ENCODE measurements at regions of chr1 and their contacts with region 1.

Region 1: GRCh38 chr1:6784560-6785317 is 515 bp upstream of the CAMTA1 start:
- DNase-seq: peak; percentile 98 to 100 (median 100)
- H3K4me3 ChIP-seq: peak overlapping the region; percentile 60 to 99 (median 87)
- H3K27ac ChIP-seq: peak overlapping the region; percentile 82 to 100 (median 96)
- H3K27me3 ChIP-seq: no peaks in the 10 kb centered on the region
- CTCF ChIP-seq: peak in 11 of 56 donors; percentile 2 to 19 (median 9)

Region 2: GRCh38 chr1:6624710-6625583 is 159.8 kb before region 1 on chr1 and contains the start of gene THAP3:
- intact Hi-C with region 1: loop called in 1 of 2 experiments (anchors 10 kb)
- DNase-seq: peak; percentile 65 to 90 (median 81)
- H3K4me3 ChIP-seq: peak within 1 kb of the TSS; percentile 64 to 97 (median 86)
- H3K27ac ChIP-seq: peak within 1 kb of the TSS; percentile 38 to 95 (median 88)
- H3K27me3 ChIP-seq: no peaks in the 10 kb centered on the region
- CTCF ChIP-seq: peak in 22 of 56 donors; percentile 7 to 50 (median 22)
- total RNA-seq, gene THAP3: 15.9 to 40.5 (median 24.6) TPM

Region 3: DNA sequence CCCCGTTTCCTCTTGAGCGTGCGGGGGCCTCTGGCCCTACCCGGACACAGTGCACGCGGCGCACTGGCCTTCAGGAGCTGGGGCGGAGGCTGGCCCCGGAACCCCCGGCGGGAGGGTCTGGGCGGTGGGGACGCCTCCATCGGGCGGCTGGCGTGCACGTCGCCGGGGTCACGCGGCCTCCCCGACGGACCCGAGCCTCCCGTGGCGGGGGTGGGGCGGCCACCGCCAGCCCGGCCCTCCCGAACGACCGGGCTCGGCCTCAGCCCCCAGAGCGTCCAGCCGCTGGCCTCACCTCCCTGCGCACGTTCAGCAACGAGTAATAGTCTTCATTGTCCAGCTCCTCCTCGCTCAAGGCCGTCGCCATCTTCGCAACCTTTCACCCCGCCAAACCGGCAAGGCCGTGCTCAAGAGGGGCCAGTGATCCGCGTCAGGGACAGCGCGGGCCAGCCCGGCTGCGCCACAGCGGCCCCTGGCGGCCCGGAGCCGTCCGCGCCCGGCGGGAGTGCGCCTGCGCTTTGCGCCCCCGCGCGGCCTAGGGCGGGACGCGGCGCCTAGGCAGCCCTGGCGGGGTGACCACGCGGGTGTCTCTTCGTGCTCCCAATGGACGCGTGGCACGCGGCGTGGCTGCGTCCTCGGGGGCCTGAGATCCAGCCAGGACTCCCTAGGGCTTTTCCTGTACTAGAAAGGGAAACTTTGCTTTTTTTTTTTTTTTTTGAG is 83.1 kb before region 1 on chr1 and contains the start of gene DNAJC11:
- intact Hi-C with region 1: loop called (anchors 2 to 5 kb)
- DNase-seq: peak; percentile 80 to 94 (median 88)
- H3K4me3 ChIP-seq: peak within 1 kb of the TSS; percentile 67 to 100 (median 98)
- H3K27ac ChIP-seq: peak within 1 kb of the TSS in 57 of 59 donors; percentile 41 to 92 (median 79)
- H3K27me3 ChIP-seq: no peaks in the 10 kb centered on the region
- CTCF ChIP-seq: peak; percentile 39 to 100 (median 86)
- total RNA-seq, gene DNAJC11: 42.4 to 78.3 (median 59.8) TPM

Region 4: DNA sequence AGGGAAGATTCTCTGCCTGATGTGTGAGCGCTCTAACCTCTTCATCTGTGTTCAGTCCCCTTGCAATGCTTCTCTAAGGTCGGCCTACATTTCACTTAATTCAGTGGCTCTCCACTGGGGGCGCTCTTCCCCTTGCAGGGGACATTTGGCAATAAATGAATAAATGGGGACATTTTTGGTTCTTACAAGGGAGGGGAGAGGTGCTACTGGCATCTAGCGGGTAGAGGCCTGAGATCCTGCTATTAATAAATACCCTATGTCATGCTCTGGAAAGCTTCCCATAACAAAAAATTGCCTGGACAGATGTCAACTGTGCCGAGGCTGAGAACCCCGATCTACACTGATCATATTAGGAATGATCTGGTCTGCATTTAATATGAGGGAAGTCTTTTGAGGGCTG is 57.2 kb before region 1 on chr1:
- intact Hi-C with region 1: loop called in 1 of 2 experiments (anchors 5 kb)
- DNase-seq: peak in 1 of 10 donors; percentile 19
- H3K4me3 ChIP-seq: no peak overlapping the region
- H3K27ac ChIP-seq: no peak overlapping the region
- H3K27me3 ChIP-seq: no peaks in the 10 kb centered on the region
- CTCF ChIP-seq: peak; percentile 49 to 88 (median 74)

Region 5: DNA sequence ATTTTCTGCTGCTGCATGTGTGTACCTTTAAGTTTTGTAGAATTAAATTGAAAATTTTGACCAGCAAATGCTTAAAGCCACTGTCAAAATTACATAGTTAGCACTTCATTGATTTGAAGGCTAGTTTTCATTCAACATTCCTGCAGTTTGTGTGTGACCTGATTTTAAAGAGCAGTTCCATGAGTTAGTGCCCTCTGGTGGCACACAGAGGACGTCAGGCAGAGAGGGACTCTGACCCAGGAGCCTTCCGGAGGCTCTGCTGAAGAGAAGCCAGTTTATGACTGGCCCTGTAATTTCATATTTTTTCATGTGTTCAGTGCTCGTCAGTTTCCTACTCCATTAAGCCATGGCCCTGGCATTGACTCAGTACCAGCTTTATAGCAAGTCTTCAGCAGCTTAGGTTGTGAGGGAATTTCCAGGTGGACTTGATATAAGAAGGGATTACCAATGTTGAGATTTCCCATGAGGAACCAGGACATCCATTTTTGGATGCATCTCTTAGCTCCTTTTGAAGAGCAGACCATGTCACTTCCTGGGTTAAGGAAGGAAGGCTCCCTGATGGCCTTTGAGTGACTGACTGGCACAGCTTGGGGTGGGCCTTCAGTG is 105.2 kb after region 1 on chr1:
- intact Hi-C with region 1: loop called in 1 of 2 experiments (anchors 5 kb)
- DNase-seq: peak in 2 of 10 donors; percentile 40 to 54
- H3K4me3 ChIP-seq: no peak overlapping the region
- H3K27ac ChIP-seq: no peak overlapping the region
- H3K27me3 ChIP-seq: no peaks in the 10 kb centered on the region
- CTCF ChIP-seq: peak; percentile 51 to 89 (median 75)

Region 6: DNA sequence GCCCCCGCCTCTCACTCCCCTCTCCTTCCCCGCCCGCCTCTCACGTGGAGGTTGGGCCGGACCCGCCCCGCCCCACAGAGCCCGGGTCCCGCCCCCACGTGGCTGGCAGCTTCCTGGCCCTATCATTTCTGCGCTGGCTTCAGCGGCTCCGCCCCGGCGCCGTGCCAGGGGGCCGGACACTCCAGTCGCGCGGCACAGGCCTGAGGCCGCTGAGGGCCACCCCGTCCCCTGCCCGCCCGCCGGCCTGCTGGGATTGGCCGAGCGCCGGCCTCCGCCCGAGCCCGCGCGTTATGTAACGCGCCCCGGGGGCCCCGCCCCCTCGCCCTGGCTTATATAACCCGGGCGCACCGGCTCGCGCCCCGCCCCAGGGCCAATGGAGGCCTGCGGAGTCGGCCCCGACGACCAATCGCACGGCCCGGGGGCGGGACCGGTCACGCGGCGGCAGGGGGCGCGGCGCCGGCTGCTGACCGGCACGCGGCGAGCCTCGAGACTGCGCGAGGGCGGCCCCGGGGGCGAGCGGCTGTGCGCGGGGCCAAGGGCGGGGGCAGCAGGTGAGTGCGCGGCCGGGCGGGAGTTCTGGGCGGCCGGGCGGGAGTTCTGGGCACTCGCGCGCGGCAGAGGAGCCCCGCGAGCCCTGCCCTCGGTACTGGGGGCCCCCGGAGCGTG is 999.2 kb after region 1 on chr1 and contains the start of gene PER3:
- intact Hi-C with region 1: loop called in 1 of 2 experiments (anchors 5 kb)
- DNase-seq: peak; percentile 95 to 100 (median 98)
- H3K4me3 ChIP-seq: peak within 1 kb of the TSS; percentile 66 to 96 (median 85)
- H3K27ac ChIP-seq: peak within 1 kb of the TSS; percentile 67 to 99 (median 95)
- H3K27me3 ChIP-seq: no peaks in the 10 kb centered on the region
- CTCF ChIP-seq: no peak
- total RNA-seq, gene PER3: 31.2 to 79.2 (median 50.5) TPM